ENCODE measurements at regions of chr4 and their contacts with region 1.

Region 1: DNA sequence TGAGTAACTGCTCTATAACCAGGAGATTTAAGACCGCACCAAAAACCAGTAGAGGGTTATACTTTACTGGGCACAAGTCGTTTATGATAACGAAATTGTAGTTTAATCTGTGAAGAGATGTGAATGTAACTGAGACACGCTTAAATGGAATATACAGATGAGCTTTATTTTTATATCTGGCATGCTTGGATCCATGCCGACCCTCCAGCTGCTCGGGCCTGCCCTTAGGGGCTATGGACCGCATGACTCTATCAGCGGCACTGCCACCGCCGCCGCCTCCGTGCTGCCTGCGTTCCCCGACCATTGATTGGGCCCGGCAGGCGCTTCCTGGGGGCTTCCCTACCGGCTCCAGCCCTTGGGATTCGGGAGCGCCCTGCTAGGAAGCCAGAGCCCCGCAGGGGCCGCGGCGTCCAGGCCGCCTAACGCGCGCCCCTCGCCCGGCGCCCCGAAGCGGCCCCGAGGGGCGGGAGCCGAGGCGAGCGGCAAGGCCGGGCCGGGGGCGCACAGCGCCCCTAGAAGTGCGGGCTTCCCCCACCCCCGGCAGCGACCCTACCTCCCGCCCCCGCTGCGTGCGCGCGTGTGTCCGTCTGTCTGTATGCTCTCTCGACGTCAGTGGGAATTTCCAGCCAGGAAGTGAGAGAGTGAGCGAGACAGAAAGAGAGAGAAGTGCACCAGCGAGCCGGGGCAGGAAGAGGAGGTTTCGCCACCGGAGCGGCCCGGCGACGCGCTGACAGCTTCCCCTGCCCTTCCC is at the start of gene NFKB1:
- DNase-seq: peak; percentile 93
- H3K4me3 ChIP-seq: peak within 1 kb of the TSS; percentile 69 to 86 (median 81)
- H3K27ac ChIP-seq: peak within 1 kb of the TSS; percentile 91
- H3K4me1 ChIP-seq: peaks cover 19% of the 10 kb centered on the region
- H3K27me3 ChIP-seq: no peaks in the 10 kb centered on the region
- CTCF ChIP-seq: no peak
- total RNA-seq, gene NFKB1: 23.5 to 52.9 TPM

Region 2: DNA sequence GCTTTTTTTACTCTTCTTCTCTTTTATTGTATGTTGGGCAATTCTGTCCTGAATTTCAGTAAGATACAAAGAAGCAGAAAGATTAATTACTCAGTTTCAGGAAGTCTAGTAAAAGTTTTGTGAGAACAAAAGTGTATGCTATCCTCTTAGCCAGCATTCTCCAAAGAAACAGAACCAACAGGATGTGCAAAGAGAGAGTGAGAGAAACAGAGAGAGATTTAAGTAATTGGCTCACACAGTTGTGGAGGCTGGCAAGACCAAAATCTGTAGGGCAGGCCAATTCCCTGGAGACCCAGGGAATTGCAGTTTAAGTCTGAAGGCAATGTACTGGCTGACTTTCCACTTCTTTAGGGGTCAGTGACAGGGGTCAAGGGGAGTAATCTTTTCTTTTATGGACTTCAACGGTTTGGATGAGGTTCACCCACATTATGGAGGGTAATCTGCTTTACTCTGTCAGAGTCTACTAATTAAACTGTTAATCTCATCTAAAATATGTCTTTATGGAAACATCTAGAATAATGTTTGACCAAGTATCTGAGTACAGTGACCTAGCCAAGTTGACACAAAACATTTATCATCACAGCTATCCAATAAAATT is 96.3 kb before region 1 on chr4:
- CTCF ChIA-PET with region 1: no interaction called
- dilution Hi-C with region 1: no loop called
- in situ Hi-C with region 1: no loop called
- intact Hi-C with region 1: no loop called
- DNase-seq: no peak
- H3K4me3 ChIP-seq: no peak overlapping the region
- H3K27ac ChIP-seq: no peak overlapping the region
- H3K4me1 ChIP-seq: no peaks in the 10 kb centered on the region
- H3K27me3 ChIP-seq: no peaks in the 10 kb centered on the region
- CTCF ChIP-seq: no peak

Region 3: GRCh38 chr4:102430461-102430910 is 70.4 kb before region 1 on chr4:
- CTCF ChIA-PET with region 1: no interaction called
- dilution Hi-C with region 1: no loop called
- in situ Hi-C with region 1: no loop called
- intact Hi-C with region 1: no loop called
- DNase-seq: peak; percentile 36
- H3K4me3 ChIP-seq: peak overlapping the region; percentile 44 to 99 (median 75)
- H3K27ac ChIP-seq: peak overlapping the region; percentile 98
- H3K4me1 ChIP-seq: peaks cover 12% of the 10 kb centered on the region
- H3K27me3 ChIP-seq: no peaks in the 10 kb centered on the region
- CTCF ChIP-seq: no peak

Region 4: GRCh38 chr4:102449751-102450352 is 51.0 kb before region 1 on chr4:
- CTCF ChIA-PET with region 1: no interaction called
- dilution Hi-C with region 1: no loop called
- in situ Hi-C with region 1: no loop called
- intact Hi-C with region 1: loop called (anchors 2 kb)
- DNase-seq: peak; percentile 51
- H3K4me3 ChIP-seq: no peak overlapping the region
- H3K27ac ChIP-seq: no peak overlapping the region
- H3K4me1 ChIP-seq: no peaks in the 10 kb centered on the region
- H3K27me3 ChIP-seq: no peaks in the 10 kb centered on the region
- CTCF ChIP-seq: peak; percentile 48 to 75

Region 5: GRCh38 chr4:102518703-102519131 is 17.8 kb after region 1 on chr4:
- CTCF ChIA-PET with region 1: no interaction called
- dilution Hi-C with region 1: no loop called
- in situ Hi-C with region 1: no loop called
- intact Hi-C with region 1: loop called (anchors 2 kb)
- DNase-seq: no peak
- H3K4me3 ChIP-seq: no peak overlapping the region
- H3K27ac ChIP-seq: no peak overlapping the region
- H3K4me1 ChIP-seq: no peaks in the 10 kb centered on the region
- H3K27me3 ChIP-seq: no peaks in the 10 kb centered on the region
- CTCF ChIP-seq: no peak

Region 6: GRCh38 chr4:102535398-102536082 is 34.7 kb after region 1 on chr4:
- CTCF ChIA-PET with region 1: no interaction called
- dilution Hi-C with region 1: no loop called
- in situ Hi-C with region 1: no loop called
- intact Hi-C with region 1: loop called (anchors 5 kb)
- DNase-seq: peak; percentile 61
- H3K4me3 ChIP-seq: no peak overlapping the region
- H3K27ac ChIP-seq: peak overlapping the region; percentile 6
- H3K4me1 ChIP-seq: peaks cover 29% of the 10 kb centered on the region
- H3K27me3 ChIP-seq: no peaks in the 10 kb centered on the region
- CTCF ChIP-seq: no peak

Region 7: GRCh38 chr4:102598086-102598761 is 97.4 kb after region 1 on chr4:
- CTCF ChIA-PET with region 1: no interaction called
- dilution Hi-C with region 1: no loop called
- in situ Hi-C with region 1: no loop called
- intact Hi-C with region 1: loop called (anchors 10 kb)
- DNase-seq: no peak
- H3K4me3 ChIP-seq: no peak overlapping the region
- H3K27ac ChIP-seq: no peak overlapping the region
- H3K4me1 ChIP-seq: peaks cover 11% of the 10 kb centered on the region
- H3K27me3 ChIP-seq: no peaks in the 10 kb centered on the region
- CTCF ChIP-seq: no peak

Measured in mammary epithelial cell (primary cell).